Mammary epithelial cell (primary cell): ENCODE measurements at regions of chr7 and their contacts with region 1.

Region 1: DNA sequence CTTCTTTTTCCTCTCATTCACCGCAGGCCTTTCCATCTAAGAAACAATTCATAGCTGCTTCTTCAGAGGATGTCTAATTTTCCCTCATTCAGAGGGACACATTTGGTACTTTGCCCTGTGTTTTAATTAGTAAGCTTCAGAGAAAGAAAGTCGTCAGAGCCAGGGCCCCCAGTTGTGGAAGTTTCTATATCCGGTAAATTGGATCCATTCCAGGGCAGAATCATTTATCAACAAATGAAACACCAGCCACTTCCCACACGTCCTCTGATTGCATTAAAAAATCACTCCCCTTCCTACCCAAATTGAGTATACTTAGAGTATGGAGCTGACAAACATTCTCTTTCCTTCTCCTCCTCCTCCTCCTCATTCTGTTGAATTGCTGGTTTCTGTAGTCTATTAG is 205.8 kb upstream of the HDAC9 start:
- DNase-seq: no peak
- H3K4me3 ChIP-seq: no peak overlapping the region
- H3K27ac ChIP-seq: no peak overlapping the region
- H3K4me1 ChIP-seq: no peaks in the 10 kb centered on the region
- H3K27me3 ChIP-seq: peaks cover 11% of the 10 kb centered on the region
- CTCF ChIP-seq: no peak

Region 2: GRCh38 chr7:18230271-18230670 is 59.5 kb before region 1 on chr7:
- CTCF ChIA-PET with region 1: no interaction called
- dilution Hi-C with region 1: loop called (anchors 5 kb)
- in situ Hi-C with region 1: no loop called
- intact Hi-C with region 1: no loop called
- DNase-seq: no peak
- H3K4me3 ChIP-seq: no peak overlapping the region
- H3K27ac ChIP-seq: no peak overlapping the region
- H3K4me1 ChIP-seq: no peaks in the 10 kb centered on the region
- H3K27me3 ChIP-seq: no peaks in the 10 kb centered on the region
- CTCF ChIP-seq: no peak